Heart right ventricle (tissue), 16 donors: ENCODE measurements at regions of chr15 and their contacts with region 1.

Region 1: DNA sequence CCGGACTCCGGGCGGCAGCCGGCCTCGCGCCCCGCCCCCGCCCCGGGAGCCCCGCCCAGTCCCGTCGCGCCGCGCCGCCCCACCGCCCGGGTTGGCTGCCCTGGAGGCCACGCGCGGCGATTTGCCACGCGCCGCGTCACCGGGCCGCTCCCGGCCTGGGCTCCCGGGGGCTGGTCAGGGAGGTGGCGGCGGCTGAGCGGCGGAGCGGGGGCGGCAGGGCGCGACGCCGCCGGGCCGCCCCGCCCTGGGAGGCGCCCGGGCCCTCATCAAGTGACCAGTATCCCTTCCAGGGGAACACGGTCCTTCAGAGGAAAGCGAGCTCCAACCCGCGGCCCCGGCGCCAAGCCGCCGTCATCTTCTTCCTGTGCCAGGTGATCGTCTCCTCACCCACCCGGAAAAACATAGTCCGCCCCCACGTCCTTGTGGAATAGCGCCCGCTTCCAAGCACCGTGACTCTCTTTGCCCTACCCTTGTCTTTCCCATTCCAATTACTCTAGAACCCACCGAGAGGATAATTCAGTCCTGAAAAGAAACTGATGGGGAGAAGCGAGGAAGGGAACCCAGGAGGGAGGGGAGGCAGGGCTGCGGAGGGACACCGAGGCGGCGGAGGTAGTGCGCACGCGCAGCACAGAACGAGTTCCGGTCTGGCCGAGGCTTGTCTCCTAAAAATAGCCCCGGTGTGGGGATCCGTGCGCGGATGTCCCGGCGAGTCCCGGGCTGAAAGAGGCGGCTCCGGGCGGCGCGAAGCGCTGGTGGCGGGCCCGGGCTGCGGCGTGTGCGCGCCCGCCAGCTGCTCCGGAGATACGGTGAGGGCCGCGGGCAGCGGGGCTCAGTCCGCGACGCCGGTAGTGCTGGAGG is at the start of gene MEF2A:
- DNase-seq: peak; percentile 96 to 97
- ATAC-seq: peak; percentile 83 to 91 (median 86)
- H3K4me3 ChIP-seq: peak within 1 kb of the TSS; percentile 68 to 91 (median 84)
- H3K27ac ChIP-seq: peak within 1 kb of the TSS; percentile 93 to 100 (median 99)
- H3K4me1 ChIP-seq: peaks cover 6 to 62% (median 42%) of the 10 kb centered on the region in 9 donors
- H3K27me3 ChIP-seq: no peaks in the 10 kb centered on the region
- CTCF ChIP-seq: no peak
- total RNA-seq, gene MEF2A: 121 to 194 (median 173) TPM

Region 2: DNA sequence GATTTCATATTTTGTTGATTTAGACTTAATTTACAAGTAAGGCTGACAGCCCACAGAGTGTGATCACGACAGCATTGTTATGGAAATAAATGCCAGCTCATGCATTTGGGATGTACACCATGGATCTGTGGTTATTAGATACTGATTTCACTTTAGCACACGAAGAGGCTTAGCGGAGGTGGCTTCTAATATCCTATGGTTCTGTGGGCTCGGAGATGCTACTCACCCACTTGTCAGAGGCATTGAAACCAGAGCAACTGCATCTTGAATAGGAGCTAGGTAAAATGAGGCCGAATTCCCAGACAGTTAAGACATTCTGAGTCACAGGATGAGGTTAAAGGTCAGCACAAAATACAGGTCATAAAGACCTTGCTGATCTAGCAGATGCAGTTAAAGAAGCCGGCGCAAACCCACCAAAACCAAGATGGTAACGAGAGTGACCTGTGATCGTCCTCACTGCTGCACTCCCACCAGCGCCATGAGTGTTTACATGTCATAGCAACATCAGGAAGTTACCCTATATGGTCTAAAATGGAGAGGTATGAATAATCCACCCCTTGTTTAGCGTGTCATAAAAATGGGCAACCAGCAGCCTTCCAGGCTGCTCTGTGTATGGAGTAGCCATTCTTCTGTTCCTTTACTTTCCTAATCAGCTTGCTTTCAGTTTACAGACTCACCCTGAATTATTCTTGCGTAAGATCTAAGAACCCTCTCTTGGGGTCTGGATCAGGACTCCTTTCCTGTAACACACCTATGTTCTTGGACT is 675.4 kb before region 1 on chr15:
- intact Hi-C with region 1: no loop called
- DNase-seq: no peak
- ATAC-seq: no peak
- H3K4me3 ChIP-seq: no peak overlapping the region
- H3K27ac ChIP-seq: peak overlapping the region in 1 of 10 donors; percentile 56
- H3K4me1 ChIP-seq: peaks cover 0 to 31% (median 7%) of the 10 kb centered on the region in 9 donors
- H3K27me3 ChIP-seq: no peaks in the 10 kb centered on the region
- CTCF ChIP-seq: no peak

Region 3: GRCh38 chr15:99305761-99306505 is 259.6 kb before region 1 on chr15:
- intact Hi-C with region 1: loop called in 1 of 10 experiments (anchors 10 kb)
- DNase-seq: peak; percentile 50 to 53
- ATAC-seq: peak in 7 of 8 donors; percentile 43 to 84 (median 69)
- H3K4me3 ChIP-seq: peak overlapping the region in 4 of 10 donors; percentile 15 to 33 (median 22)
- H3K27ac ChIP-seq: peak overlapping the region in 9 of 10 donors; percentile 23 to 79 (median 67)
- H3K4me1 ChIP-seq: peaks cover 0 to 30% (median 25%) of the 10 kb centered on the region in 9 donors
- H3K27me3 ChIP-seq: no peaks in the 10 kb centered on the region
- CTCF ChIP-seq: no peak

Region 4: DNA sequence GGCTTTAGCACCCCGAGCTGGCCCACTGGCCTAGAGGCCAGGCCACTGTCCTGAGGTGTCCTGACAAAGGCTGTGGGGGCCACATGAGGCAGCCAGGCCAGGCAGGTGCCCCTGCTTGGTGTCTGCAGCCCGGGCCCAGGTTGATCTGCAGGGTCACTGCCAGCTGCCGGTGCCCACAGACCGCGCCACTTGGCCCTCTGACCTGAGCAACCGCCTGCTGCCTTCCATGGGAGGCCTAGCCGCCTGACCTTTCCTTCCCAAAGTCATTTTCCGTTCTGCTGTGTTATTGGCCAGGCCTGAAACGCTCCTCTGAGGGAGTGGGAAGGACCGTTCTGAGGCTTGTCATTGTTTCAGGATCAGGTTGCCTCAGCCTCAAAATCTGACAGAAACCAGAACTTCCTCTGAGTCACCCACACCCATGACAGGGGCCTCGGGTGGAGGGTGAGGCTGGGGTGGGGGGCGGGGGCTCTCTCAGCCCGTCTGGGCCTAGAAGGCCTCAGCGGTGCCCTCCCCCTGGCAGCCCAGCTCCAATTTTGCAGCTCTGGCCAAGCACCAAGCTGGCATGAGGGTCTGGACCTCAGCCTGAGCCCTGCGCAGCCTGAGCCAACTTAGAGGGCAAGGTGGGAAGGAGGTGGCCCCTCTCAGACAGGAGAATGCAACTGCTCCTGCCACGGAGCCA is 140.4 kb before region 1 on chr15:
- intact Hi-C with region 1: loop called in 4 of 10 experiments (anchors 1 to 10 kb)
- DNase-seq: peak; percentile 71 to 80
- ATAC-seq: peak; percentile 79 to 94 (median 90)
- H3K4me3 ChIP-seq: no peak overlapping the region
- H3K27ac ChIP-seq: peak overlapping the region; percentile 70 to 99 (median 94)
- H3K4me1 ChIP-seq: peaks cover 4 to 45% (median 29%) of the 10 kb centered on the region in 9 donors
- H3K27me3 ChIP-seq: no peaks in the 10 kb centered on the region
- CTCF ChIP-seq: no peak

Region 5: GRCh38 chr15:99452774-99453636 is 112.5 kb before region 1 on chr15:
- intact Hi-C with region 1: loop called in 5 of 10 experiments (anchors 1 to 5 kb)
- DNase-seq: peak; percentile 90 to 92
- ATAC-seq: peak; percentile 50 to 75 (median 64)
- H3K4me3 ChIP-seq: peak overlapping the region in 5 of 10 donors; percentile 6 to 15 (median 11)
- H3K27ac ChIP-seq: peak overlapping the region; percentile 84 to 99 (median 94)
- H3K4me1 ChIP-seq: peaks cover 50 to 86% (median 69%) of the 10 kb centered on the region in 9 donors
- H3K27me3 ChIP-seq: no peaks in the 10 kb centered on the region
- CTCF ChIP-seq: no peak

Region 6: DNA sequence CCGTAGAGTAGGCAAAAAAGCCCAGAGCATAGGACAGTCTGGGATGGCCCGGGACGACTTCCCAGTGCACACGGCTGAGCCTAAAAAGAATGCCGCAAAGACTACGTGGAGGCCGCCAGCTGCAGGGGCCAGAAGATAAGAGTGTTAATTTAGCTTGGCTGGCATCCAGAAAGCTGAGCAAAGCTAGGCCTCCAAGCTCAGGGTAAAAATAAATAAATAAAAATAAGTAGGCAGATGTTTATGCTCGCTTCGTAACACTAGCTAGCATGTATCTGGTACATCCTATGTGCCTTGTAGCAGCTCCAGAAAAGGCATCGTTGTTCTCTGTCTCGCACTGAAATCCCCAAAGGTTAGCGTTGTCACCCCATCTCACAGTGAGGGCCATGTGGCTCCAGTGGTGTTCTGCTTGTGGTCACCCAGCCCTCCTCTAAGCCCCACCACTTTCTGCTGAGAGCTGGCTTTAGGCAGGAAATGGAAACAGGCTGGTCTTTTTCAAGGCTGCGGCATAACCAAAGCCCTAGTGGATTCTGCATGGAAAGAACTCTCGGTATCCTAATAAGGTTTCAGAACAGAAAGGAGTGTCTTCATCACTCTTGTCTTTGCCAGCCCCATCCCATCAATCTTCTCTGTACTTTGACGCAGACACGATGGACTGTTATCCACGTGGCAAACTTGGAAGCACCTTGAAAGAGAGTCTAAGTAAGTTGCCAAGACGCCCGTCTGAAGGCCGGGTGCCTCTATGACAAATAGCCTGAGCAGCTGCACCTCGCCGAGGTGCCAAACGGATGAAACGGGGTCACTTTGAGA is 57.8 kb before region 1 on chr15:
- intact Hi-C with region 1: loop called in 6 of 10 experiments (anchors 2 to 10 kb)
- DNase-seq: peak; percentile 71 to 82
- ATAC-seq: peak; percentile 78 to 92 (median 86)
- H3K4me3 ChIP-seq: peak overlapping the region in 2 of 10 donors; percentile 5 to 21
- H3K27ac ChIP-seq: peak overlapping the region; percentile 9 to 91 (median 80)
- H3K4me1 ChIP-seq: peaks cover 3 to 93% (median 74%) of the 10 kb centered on the region in 9 donors
- H3K27me3 ChIP-seq: no peaks in the 10 kb centered on the region
- CTCF ChIP-seq: no peak

Region 7: GRCh38 chr15:99704444-99704838 is 138.9 kb after region 1 on chr15:
- intact Hi-C with region 1: loop called in 8 of 10 experiments (anchors 2 to 10 kb)
- DNase-seq: peak in 1 of 2 donors; percentile 78
- ATAC-seq: peak; percentile 52 to 88 (median 80)
- H3K4me3 ChIP-seq: peak overlapping the region in 2 of 10 donors; percentile 3 to 13
- H3K27ac ChIP-seq: peak overlapping the region; percentile 59 to 92 (median 83)
- H3K4me1 ChIP-seq: peaks cover 11 to 76% (median 55%) of the 10 kb centered on the region in 9 donors
- H3K27me3 ChIP-seq: no peaks in the 10 kb centered on the region
- CTCF ChIP-seq: peak; percentile 44 to 87 (median 79)